HEK293 (cell line): ENCODE measurements at regions of chr19 and their contacts with region 1.

Region 1: GRCh38 chr19:36114763-36115452 is at the start of gene POLR2I:
- H3K4me3 ChIP-seq: peak within 1 kb of the TSS; percentile 58
- H3K27ac ChIP-seq: peak within 1 kb of the TSS; percentile 92
- H3K4me1 ChIP-seq: peaks cover 27% of the 10 kb centered on the region
- CTCF ChIP-seq: 0 out of 2 replicates have a peak, but pooled peaks have one; percentile 11

Region 2: DNA sequence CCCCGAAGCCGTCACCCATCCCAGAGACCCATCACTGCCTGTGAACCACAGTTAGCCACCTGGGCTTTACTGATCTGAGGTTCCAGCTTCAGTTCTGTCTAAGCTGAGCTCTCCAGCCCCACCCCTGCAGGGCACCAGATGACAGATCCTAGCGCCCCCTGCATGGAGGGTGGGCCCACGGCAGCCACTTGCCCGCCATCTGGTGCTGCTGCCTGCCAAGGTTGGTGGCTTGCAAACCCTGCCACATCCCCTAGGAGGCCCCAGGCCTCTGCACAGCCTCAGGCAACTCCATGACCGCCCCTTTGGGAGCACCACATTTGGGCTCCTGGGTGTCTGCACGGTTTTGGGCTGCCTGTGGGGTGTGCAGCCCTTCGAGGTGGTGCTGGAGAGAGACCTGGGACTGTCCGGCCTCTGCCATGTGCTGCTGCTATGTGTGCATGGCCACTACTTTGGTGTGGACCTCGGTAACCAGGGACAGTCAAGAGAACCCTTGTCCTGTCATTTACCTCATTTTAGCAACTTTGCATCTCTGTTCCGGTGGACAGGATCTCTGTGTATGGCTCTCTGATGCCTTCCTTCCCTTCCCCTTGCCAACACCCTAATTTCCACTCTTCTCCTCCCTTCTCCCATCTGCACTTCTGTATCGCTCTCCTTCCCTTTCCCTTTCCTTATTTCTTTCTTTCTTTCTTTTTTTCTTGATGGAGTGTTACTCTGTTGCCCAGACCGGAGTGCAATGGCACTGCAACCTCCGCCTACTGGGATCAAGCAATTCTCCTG is 137.3 kb before region 1 on chr19:
- CTCF ChIA-PET with region 1: no interaction called
- POLR2A ChIA-PET with region 1: interaction called, 10 read pairs
- H3K4me3 ChIP-seq: no peak overlapping the region
- H3K27ac ChIP-seq: no peak overlapping the region
- H3K4me1 ChIP-seq: no peaks in the 10 kb centered on the region
- CTCF ChIP-seq: peak; percentile 95

Region 3: GRCh38 chr19:36060430-36060829 is 54.5 kb before region 1 on chr19:
- CTCF ChIA-PET with region 1: interaction called, 23 read pairs
- POLR2A ChIA-PET with region 1: interaction called, 28 read pairs
- H3K4me3 ChIP-seq: no peak overlapping the region
- H3K27ac ChIP-seq: peak overlapping the region; percentile 21; the same call in 1 of the 2 replicates
- H3K4me1 ChIP-seq: peaks cover 23% of the 10 kb centered on the region
- CTCF ChIP-seq: peak; percentile 97

Region 4: DNA sequence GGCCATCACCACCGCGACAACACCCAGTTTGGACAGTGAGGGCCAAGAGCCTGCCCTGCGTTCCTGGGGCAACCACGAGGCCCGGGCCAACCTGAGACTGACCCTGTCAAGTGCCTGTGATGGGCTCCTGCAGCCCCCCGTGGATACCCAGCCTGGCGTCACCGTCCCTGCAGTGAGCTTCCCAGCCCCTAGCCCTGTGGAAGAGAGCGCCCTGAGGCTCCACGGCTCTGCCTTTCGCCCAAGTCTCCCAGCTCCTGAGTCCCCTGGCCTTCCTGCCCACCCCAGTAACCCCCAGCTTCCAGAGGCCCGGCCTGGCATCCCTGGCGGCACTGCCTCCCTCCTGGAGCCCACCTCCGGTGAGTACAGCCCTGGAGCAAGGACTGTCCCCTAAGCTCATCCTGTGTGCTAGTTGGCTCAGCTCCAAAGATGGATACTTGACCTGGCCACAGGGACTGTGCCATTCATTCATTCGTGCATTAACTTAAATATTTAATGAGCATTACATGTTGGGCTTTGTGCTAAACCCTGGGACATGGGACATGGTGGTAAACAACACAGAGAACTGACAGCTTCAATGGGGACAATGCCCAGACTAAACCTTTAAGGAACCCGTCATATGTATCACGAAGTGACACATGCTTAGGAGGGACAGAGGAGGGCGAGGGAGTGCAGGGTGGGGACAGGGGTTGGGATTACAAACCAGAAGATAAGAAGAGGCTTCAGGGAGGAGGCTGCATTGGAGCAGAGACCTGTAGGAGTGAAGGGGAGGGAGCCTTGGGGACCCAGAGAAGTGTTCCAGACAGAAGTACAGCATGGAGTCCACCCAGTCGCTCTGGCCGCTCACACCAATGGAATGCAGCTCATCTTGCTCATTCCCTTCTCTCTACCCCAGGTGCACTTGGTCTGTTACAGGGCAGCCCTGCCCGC is 11.0 kb before region 1 on chr19:
- CTCF ChIA-PET with region 1: no interaction called
- POLR2A ChIA-PET with region 1: interaction called, 33 read pairs
- H3K4me3 ChIP-seq: no peak overlapping the region
- H3K27ac ChIP-seq: peak overlapping the region; percentile 7; the same call in 1 of the 2 replicates
- H3K4me1 ChIP-seq: no peaks in the 10 kb centered on the region
- CTCF ChIP-seq: no peak

Region 5: DNA sequence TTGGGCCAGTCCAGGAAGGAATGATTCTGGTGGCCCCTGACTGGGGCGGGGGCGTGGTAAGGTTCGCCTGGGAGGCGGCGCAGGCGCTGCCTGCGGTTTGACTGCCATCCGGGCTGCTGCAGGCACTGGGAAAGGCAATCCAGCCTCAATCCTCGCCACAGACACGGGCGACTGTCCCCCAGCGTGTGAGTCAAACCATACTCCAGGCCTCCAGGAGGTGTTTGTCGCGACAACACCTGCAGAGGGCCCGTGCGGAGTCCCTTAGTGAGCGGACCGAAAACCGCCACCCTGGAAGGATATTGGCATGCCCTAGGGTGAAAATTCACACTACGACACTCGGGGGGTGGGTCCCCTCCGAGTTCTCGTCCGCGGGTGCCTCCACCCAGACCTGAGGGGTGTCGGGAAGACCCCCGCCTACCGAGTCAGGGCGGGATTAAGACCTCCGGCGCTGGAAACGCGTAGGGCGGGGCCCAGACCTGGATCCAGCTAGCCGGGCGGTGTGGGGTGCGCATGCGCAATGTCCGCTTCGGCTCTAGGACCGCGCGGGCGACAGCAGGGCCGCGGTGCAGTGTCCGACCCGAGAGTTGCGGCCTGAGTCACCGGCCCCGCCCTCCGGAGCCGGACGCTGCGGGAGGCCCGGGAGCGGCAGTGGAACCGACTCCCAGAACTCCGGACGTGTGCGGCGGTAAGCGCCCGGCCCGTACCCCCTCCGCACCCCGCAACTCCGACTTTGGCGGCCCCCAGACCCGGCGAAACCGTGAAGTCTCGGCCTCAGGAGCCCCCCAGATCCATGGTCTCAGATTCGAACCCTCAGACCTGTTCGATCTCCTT is 24.8 kb after region 1 on chr19 and contains the start of gene CAPNS1:
- CTCF ChIA-PET with region 1: interaction called, 6 read pairs
- POLR2A ChIA-PET with region 1: interaction called, 17 read pairs
- H3K4me3 ChIP-seq: peak within 1 kb of the TSS; percentile 80
- H3K27ac ChIP-seq: peak within 1 kb of the TSS; percentile 94
- H3K4me1 ChIP-seq: peaks cover 14% of the 10 kb centered on the region
- CTCF ChIP-seq: peak; percentile 94

Region 6: GRCh38 chr19:36214386-36215275 is 99.7 kb after region 1 on chr19 and contains the starts of genes ZNF146 and ZNF565:
- CTCF ChIA-PET with region 1: interaction called, 5 read pairs
- POLR2A ChIA-PET with region 1: interaction called, 19 read pairs
- H3K4me3 ChIP-seq: peak within 1 kb of the TSS; percentile 67
- H3K27ac ChIP-seq: peak within 1 kb of the TSS; percentile 93
- H3K4me1 ChIP-seq: peaks cover 7% of the 10 kb centered on the region
- CTCF ChIP-seq: peak; percentile 75; the same call in 1 of the 2 replicates